PC-3 (cell line): ENCODE measurements at regions of chr20 and their contacts with region 1.

Region 1: DNA sequence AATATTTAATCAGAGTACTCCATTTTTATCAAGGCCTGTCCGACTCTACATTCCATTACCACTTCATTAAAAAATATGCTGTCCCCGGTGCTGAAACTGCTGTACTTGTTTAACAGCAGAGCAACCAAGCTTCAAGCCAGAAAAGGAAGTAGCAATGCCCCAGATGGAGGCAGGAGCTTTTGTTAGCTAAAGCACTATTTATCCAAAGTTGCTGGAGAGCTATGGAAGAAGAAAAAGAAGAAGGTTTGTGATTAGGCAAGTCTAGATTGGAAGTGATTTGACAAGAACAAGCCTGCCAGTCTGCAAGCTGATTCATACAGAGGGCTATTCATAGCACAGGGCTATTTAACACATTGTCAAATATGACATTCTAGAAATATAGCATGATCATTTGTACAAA is 160.9 kb upstream of the SPTLC3 start:
- DNase-seq: peak; percentile 44
- ATAC-seq: no peak
- H3K4me3 ChIP-seq: no peak overlapping the region
- H3K27ac ChIP-seq: no peak overlapping the region
- H3K4me1 ChIP-seq: no peaks in the 10 kb centered on the region
- H3K27me3 ChIP-seq: peaks cover 63% of the 10 kb centered on the region
- CTCF ChIP-seq: no peak

Region 2: DNA sequence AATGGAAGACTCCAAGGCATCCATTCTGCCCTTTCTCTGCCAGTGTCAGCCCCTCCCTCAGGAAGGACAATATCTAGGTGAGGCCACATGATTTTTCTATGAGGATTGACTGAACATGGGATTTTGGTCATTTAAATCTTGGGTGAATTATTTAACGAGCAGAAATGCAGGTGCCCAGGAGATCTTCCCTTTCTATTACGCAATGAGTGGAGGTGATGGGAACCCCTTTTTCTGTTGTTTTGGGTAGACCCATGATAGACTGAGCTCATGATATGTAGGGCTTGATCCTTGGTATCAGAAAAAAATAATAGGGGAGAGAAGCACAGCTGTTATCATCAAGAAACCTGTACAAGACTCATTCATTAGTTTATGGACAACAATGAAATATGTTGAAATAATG is 48.3 kb after region 1 on chr20:
- CTCF ChIA-PET with region 1: no interaction called
- POLR2A ChIA-PET with region 1: no interaction called
- intact Hi-C with region 1: loop called (anchors 5 kb)
- DNase-seq: no peak
- ATAC-seq: no peak
- H3K4me3 ChIP-seq: no peak overlapping the region
- H3K27ac ChIP-seq: no peak overlapping the region
- H3K4me1 ChIP-seq: no peaks in the 10 kb centered on the region
- H3K27me3 ChIP-seq: peaks cover 98% of the 10 kb centered on the region
- CTCF ChIP-seq: no peak